SK-N-SH (cell line): ENCODE measurements at regions of chr2 and their contacts with region 1.

Region 1: DNA sequence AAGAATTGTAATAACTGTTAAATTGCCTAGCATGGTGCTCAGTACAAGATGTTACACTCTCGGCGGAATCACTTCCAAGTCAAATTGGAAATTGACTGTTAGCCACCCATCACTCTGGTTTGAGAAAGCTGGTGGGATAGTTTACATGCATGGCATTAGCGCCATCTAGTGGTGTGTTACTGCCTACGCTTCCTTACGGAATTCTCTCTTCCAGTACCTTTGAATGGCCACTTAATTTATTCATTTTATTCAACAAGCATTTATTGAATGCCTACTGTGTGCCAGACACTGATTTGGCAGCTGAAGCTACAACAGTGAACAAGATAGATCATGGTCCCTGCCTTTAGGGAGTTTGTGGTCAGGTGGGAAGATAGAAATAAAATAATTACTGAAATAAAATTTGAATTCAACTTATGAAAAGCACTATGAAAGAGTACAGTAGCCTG is 171.2 kb downstream of the TMEM247 start:
- DNase-seq: peak; percentile 71
- H3K4me3 ChIP-seq: no peak overlapping the region; a peak in 1 of 4 replicates
- H3K27ac ChIP-seq: no peak overlapping the region
- H3K4me1 ChIP-seq: peaks cover 15 to 19% of the 10 kb centered on the region in 2 experiments
- H3K27me3 ChIP-seq: no peaks in the 10 kb centered on the region
- CTCF ChIP-seq: peak; percentile 99
- EP300 ChIP-seq: no peak
- RAD21 ChIP-seq: peak; percentile 99

Region 2: DNA sequence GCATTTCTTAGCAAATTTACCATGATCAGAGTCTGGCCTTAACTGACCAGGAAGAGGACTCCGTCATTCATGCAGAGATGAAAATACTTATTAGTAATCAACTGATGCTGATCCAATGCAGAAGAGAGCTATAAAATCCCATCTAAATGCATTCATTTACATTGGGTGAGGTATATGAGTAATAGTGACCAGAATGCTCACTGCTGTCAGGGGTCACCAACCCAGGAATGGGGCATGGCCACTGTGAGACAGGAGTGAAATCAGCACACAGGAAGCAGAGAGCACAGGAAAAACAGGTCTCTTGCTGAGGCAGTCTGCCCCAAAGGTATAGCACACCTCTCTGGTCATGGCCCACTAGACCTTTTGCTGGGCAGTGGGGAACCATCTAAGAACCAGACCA is 239.3 kb before region 1 on chr2:
- CTCF ChIA-PET with region 1: interaction called, 10 read pairs
- POLR2A ChIA-PET with region 1: no interaction called
- DNase-seq: no peak
- H3K4me3 ChIP-seq: no peak overlapping the region
- H3K27ac ChIP-seq: no peak overlapping the region
- H3K4me1 ChIP-seq: peaks cover 0 to 3% of the 10 kb centered on the region in 2 experiments; a peak in 1 of 4 replicates
- H3K27me3 ChIP-seq: no peaks in the 10 kb centered on the region
- CTCF ChIP-seq: no peak
- EP300 ChIP-seq: no peak
- RAD21 ChIP-seq: no peak

Region 3: DNA sequence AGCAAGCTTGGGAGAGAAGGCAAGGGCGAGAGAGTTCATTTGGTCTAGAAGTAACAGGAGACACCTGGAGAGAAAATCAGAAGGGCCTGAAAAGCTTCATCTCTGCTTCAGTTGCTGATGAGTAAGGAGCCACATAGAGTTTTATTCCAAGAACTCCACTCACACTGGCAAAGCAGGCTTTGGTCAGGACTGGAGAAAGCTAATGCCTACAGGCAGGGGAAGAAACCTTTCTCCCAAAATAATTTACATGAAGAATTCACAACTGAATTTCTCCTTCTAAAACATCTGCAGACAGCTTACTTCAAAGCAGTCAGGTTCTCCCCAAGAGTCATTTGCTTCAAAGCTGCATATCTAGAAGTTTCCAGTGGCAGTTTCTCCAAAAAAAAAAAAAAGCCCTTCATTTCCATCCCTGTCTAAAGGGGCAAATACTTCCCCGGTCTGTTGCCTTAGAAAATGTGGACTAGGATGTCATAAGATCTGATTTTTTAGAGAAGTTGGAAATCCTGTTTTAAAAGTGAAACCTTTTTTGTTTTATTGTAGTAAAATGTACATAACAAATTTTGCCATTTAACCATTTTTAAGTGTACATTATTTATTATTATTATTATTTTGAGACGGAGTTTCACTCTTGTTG is 124.9 kb before region 1 on chr2:
- CTCF ChIA-PET with region 1: no interaction called
- POLR2A ChIA-PET with region 1: no interaction called
- DNase-seq: no peak
- H3K4me3 ChIP-seq: no peak overlapping the region
- H3K27ac ChIP-seq: no peak overlapping the region
- H3K4me1 ChIP-seq: peaks cover 0 to 2% of the 10 kb centered on the region in 2 experiments; a peak in 1 of 4 replicates
- H3K27me3 ChIP-seq: no peaks in the 10 kb centered on the region
- CTCF ChIP-seq: no peak
- EP300 ChIP-seq: no peak
- RAD21 ChIP-seq: no peak

Region 4: DNA sequence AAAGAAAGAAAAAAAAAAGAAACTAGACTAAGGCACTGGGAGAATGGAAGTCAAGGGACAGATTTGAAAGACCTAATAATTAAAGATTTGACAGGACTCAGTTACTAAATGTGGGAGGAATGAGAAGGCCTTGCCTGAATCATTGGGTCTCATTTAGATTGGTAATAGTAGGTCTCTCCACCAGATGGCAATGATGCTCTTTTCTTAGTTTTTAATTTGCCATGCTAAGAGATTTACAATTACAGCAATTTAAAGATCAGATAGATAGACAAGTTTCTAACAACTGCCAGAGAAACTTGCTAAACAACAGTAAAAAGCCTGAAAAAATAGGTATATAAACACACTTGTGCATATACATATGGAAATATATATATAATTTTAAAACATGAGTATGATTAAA is 18.2 kb before region 1 on chr2:
- CTCF ChIA-PET with region 1: interaction called, 20 read pairs
- POLR2A ChIA-PET with region 1: no interaction called
- DNase-seq: peak; percentile 56
- H3K4me3 ChIP-seq: no peak overlapping the region
- H3K27ac ChIP-seq: peak overlapping the region in 1 of 2 experiments; percentile 17; a peak in 1 of 4 replicates
- H3K4me1 ChIP-seq: no peaks in the 10 kb centered on the region
- H3K27me3 ChIP-seq: no peaks in the 10 kb centered on the region
- CTCF ChIP-seq: peak; percentile 87
- EP300 ChIP-seq: no peak
- RAD21 ChIP-seq: peak; percentile 92

Region 5: GRCh38 chr2:46690825-46691224 is 40.2 kb after region 1 on chr2:
- CTCF ChIA-PET with region 1: interaction called, 12 read pairs
- POLR2A ChIA-PET with region 1: no interaction called
- DNase-seq: no peak
- H3K4me3 ChIP-seq: no peak overlapping the region; a peak in 1 of 4 replicates
- H3K27ac ChIP-seq: peak overlapping the region; percentile 93 to 99; a peak in 3 of 4 replicates
- H3K4me1 ChIP-seq: peaks cover 0 to 22% of the 10 kb centered on the region in 2 experiments
- H3K27me3 ChIP-seq: no peaks in the 10 kb centered on the region
- CTCF ChIP-seq: no peak
- EP300 ChIP-seq: peak; percentile 39 to 97; a peak in 3 of 4 replicates
- RAD21 ChIP-seq: no peak

Region 6: GRCh38 chr2:46863295-46864281 is 213.0 kb after region 1 on chr2:
- CTCF ChIA-PET with region 1: interaction called, 12 read pairs
- POLR2A ChIA-PET with region 1: no interaction called
- DNase-seq: no peak
- H3K4me3 ChIP-seq: no peak overlapping the region
- H3K27ac ChIP-seq: no peak overlapping the region
- H3K4me1 ChIP-seq: peaks cover 10 to 13% of the 10 kb centered on the region in 2 experiments; a peak in 3 of 4 replicates
- H3K27me3 ChIP-seq: no peaks in the 10 kb centered on the region
- CTCF ChIP-seq: no peak
- EP300 ChIP-seq: no peak
- RAD21 ChIP-seq: no peak

Region 7: GRCh38 chr2:46893269-46893945 is 242.8 kb after region 1 on chr2:
- CTCF ChIA-PET with region 1: interaction called, 99 read pairs
- POLR2A ChIA-PET with region 1: no interaction called
- DNase-seq: no peak
- H3K4me3 ChIP-seq: no peak overlapping the region
- H3K27ac ChIP-seq: no peak overlapping the region
- H3K4me1 ChIP-seq: peaks cover 0 to 5% of the 10 kb centered on the region in 2 experiments; a peak in 2 of 4 replicates
- H3K27me3 ChIP-seq: no peaks in the 10 kb centered on the region
- CTCF ChIP-seq: no peak
- EP300 ChIP-seq: no peak
- RAD21 ChIP-seq: no peak